ENCODE measurements at regions of chr1 and their contacts with region 1.

Region 1: DNA sequence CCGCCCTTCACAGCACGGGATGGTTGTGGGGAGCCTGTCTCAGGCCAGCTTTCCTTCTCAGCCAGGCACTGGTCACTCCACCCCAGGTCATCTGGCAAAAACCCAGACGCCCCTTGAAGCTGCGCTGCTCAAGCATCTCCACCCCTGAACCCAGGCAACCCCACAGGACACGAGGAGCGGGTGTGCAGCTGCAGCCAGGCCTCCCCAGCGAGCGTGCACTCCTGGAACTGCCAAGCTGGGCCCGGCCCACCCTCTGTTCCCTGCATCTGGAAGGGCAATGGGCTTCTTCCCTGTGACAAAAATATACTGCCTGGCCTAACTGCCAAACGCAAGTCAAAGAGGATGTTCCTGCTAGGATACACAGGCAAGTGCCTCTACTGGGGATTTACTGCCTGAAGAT is 39.7 kb downstream of the SLC66A1 start:
- DNase-seq: no peak
- ATAC-seq: no peak
- H3K4me3 ChIP-seq: no peak overlapping the region
- H3K4me3 Mint-ChIP-seq: no peak overlapping the region
- H3K27ac ChIP-seq: no peak overlapping the region
- H3K27ac Mint-ChIP-seq: peak overlapping the region in 1 of 2 donors; percentile 22
- H3K4me1 ChIP-seq: no peaks in the 10 kb centered on the region
- H3K4me1 Mint-ChIP-seq: no peaks in the 10 kb centered on the region
- H3K27me3 ChIP-seq: no peaks in the 10 kb centered on the region
- H3K27me3 Mint-ChIP-seq: no peaks in the 10 kb centered on the region

Region 2: DNA sequence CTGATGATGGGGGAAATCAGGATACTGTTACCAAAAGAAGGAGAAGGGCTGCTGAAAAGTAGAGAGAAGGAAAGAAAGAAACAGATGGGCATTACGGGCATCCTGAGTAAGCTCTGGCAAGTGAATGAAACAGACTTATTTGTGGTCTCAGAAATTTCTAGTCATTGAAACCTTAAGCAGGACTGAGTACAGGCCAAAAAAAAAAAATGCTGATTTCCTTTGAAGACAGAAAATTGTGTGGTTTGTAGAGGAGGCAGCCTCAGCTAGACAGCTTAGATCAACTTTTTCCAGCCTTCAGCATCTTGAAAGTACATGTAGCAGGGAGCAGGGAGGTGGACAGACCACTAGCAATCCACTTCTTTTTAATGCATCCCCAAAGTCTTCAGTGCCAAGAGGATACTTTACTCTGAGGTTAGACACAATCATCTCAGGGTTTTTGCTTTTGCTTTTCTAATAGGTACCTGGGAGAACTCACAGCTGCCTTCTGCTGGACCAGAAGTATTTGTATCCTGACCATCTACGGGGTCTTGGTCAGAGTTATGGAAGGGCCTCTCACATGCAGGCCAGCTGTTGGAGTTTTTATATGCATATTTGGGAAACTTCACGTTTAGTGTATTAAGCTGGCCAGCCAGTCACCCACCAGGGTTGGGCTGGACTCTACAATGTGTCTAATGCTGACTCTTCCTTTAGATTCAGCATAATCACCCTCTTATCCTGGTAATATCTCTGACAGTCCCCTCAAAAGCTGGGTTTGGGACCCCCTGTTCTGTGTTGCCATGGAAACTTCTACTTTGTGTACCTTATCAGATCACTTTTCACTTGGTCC is 144.1 kb after region 1 on chr1:
- CTCF ChIA-PET with region 1: no interaction called
- POLR2A ChIA-PET with region 1: no interaction called
- DNase-seq: no peak
- ATAC-seq: no peak
- H3K4me3 ChIP-seq: no peak overlapping the region
- H3K4me3 Mint-ChIP-seq: no peak overlapping the region
- H3K27ac ChIP-seq: no peak overlapping the region
- H3K27ac Mint-ChIP-seq: peak overlapping the region in 1 of 2 donors; percentile 17
- H3K4me1 ChIP-seq: no peaks in the 10 kb centered on the region
- H3K4me1 Mint-ChIP-seq: peaks cover 25 to 28% (median 25%) of the 10 kb centered on the region in 3 donors
- H3K27me3 ChIP-seq: no peaks in the 10 kb centered on the region
- H3K27me3 Mint-ChIP-seq: no peaks in the 10 kb centered on the region

Region 3: DNA sequence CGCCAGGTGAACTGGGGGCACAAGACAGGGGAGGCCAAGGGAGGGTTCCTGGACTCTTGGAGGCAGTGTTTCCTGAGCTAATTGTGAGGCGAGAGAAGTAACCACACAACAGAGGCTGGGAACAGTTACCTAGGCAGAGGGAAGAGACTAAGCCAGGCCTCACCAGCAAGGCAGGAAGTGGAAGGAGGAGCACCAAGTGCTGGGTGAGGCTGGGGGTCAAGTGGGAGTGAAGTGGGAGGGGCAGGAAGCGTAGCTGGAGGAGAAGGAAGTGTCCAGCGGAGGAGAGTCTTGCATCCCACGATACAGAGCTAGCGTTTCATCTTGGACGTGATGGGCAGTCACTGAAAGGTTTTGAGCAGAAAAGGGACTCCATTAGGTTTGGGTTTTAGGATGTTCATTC is 181.8 kb after region 1 on chr1:
- CTCF ChIA-PET with region 1: no interaction called
- POLR2A ChIA-PET with region 1: no interaction called
- DNase-seq: no peak
- ATAC-seq: no peak
- H3K4me3 ChIP-seq: no peak overlapping the region
- H3K4me3 Mint-ChIP-seq: no peak overlapping the region
- H3K27ac ChIP-seq: no peak overlapping the region
- H3K27ac Mint-ChIP-seq: peak overlapping the region in 1 of 2 donors; percentile 46
- H3K4me1 ChIP-seq: no peaks in the 10 kb centered on the region
- H3K4me1 Mint-ChIP-seq: peaks cover 5 to 11% (median 8%) of the 10 kb centered on the region in 3 donors
- H3K27me3 ChIP-seq: no peaks in the 10 kb centered on the region
- H3K27me3 Mint-ChIP-seq: no peaks in the 10 kb centered on the region

Region 4: DNA sequence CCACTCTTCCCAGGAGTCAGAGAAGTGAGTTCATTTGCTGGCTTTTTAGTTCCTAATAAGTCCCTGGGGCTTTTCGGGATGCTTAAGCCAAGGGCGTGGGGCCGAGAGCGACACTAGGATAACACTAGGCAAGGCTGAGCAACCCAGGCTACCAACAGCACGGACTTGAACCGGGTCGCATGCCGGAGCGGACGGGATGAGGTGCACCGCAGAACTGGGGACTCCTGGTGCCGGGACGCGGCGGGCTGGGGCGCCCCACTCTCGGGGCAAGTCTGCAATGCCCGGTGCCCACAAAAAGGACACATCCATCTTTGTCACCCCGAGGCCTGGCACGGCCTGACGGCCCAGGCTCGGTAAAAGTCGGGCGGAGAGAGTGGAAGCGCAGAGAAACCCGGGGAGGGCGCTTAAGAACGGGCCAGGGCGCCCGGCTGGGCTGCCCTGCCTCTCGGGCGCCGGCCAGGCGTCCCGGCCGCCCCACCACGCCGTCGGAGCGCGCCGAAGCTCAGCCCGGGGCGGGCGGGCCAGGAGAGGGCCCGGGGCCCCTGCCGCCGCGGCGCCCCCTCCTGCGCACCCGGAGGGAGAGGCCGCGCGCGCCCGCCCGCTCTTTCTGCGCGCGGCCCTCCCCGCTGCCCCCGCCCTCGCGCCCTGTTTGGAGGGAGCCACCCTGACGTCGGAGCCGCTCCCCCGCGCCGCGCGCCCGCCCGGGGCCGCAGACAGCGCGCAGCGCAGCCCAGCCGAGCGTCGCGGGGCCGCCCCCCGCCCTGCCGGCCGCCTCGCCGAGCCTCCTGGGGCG is 291.9 kb after region 1 on chr1 and contains the start of gene NBL1:
- CTCF ChIA-PET with region 1: no interaction called
- POLR2A ChIA-PET with region 1: interaction called in 1 of 2 experiments, 12 read pairs
- DNase-seq: peak; percentile 40 to 86 (median 68)
- ATAC-seq: peak; percentile 90 to 92 (median 91)
- H3K4me3 ChIP-seq: peak within 1 kb of the TSS; percentile 53 to 71
- H3K4me3 Mint-ChIP-seq: peak within 1 kb of the TSS; percentile 85 to 97 (median 96)
- H3K27ac ChIP-seq: peak within 1 kb of the TSS; percentile 19
- H3K27ac Mint-ChIP-seq: peak within 1 kb of the TSS; percentile 59 to 82
- H3K4me1 ChIP-seq: peaks cover 0 to 34% of the 10 kb centered on the region in 2 experiments
- H3K4me1 Mint-ChIP-seq: peaks cover 26 to 38% (median 27%) of the 10 kb centered on the region in 3 donors
- H3K27me3 ChIP-seq: peaks cover 2 to 50% of the 10 kb centered on the region in 2 experiments
- H3K27me3 Mint-ChIP-seq: peaks cover 12 to 13% of the 10 kb centered on the region in 2 donors
- total RNA-seq, gene NBL1: 11.4 to 38.1 (median 13.7) TPM